PC-3 (cell line): ENCODE measurements at regions of chr15 and their contacts with region 1.

Region 1: GRCh38 chr15:64387562-64388168 is at the start of gene TRIP4:
- DNase-seq: peak; percentile 90
- ATAC-seq: peak; percentile 100
- H3K4me3 ChIP-seq: peak within 1 kb of the TSS; percentile 91
- H3K27ac ChIP-seq: peak within 1 kb of the TSS; percentile 43; the same call in 1 of the 2 replicates
- H3K4me1 ChIP-seq: peaks cover 5% of the 10 kb centered on the region; the same call in 1 of the 2 replicates
- H3K27me3 ChIP-seq: no peaks in the 10 kb centered on the region
- CTCF ChIP-seq: no peak
- total RNA-seq, gene TRIP4: 6.0 and 11.9 TPM in 2 replicates

Region 2: DNA sequence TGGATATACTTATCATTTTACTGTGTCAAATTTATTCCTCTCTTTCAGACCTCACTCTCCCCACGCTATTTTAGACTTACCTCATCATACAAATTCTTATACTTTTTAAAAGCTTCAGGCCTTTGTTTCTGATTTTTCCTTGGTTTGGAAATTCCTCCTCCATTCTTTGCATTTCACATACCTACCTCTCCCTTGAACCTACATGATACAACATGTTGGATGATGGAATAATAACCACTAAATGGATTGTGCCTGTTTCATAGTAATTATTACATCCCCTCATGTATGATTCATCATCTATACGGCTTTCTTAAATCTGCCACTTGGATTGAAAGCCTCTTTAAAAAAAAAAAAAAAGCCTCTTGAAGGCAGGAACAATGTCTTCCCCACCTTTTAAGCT is 24.6 kb after region 1 on chr15:
- CTCF ChIA-PET with region 1: no interaction called
- POLR2A ChIA-PET with region 1: interaction called, 13 read pairs
- intact Hi-C with region 1: no loop called
- DNase-seq: no peak
- ATAC-seq: no peak
- H3K4me3 ChIP-seq: no peak overlapping the region
- H3K27ac ChIP-seq: no peak overlapping the region
- H3K4me1 ChIP-seq: no peaks in the 10 kb centered on the region
- H3K27me3 ChIP-seq: no peaks in the 10 kb centered on the region
- CTCF ChIP-seq: no peak